Vagina (tissue), 2 donors: ENCODE measurements at regions of chr16 and their contacts with region 1.

Region 1: GRCh38 chr16:75931043-75931442 is 204.8 kb upstream of the CPHXL start:
- DNase-seq: no peak
- H3K4me3 ChIP-seq: no peak overlapping the region
- H3K27ac ChIP-seq: no peak overlapping the region
- H3K4me1 ChIP-seq: no peaks in the 10 kb centered on the region
- H3K27me3 ChIP-seq: no peaks in the 10 kb centered on the region
- CTCF ChIP-seq: no peak
- POLR2A ChIP-seq: no peak

Region 2: GRCh38 chr16:75965504-75966374 is 34.7 kb after region 1 on chr16:
- intact Hi-C with region 1: loop called (anchors 1 kb)
- DNase-seq: no peak
- H3K4me3 ChIP-seq: no peak overlapping the region
- H3K27ac ChIP-seq: no peak overlapping the region
- H3K4me1 ChIP-seq: no peaks in the 10 kb centered on the region
- H3K27me3 ChIP-seq: no peaks in the 10 kb centered on the region
- CTCF ChIP-seq: no peak
- POLR2A ChIP-seq: no peak